ENCODE measurements at regions of chr2 and their contacts with region 1.

Region 1: DNA sequence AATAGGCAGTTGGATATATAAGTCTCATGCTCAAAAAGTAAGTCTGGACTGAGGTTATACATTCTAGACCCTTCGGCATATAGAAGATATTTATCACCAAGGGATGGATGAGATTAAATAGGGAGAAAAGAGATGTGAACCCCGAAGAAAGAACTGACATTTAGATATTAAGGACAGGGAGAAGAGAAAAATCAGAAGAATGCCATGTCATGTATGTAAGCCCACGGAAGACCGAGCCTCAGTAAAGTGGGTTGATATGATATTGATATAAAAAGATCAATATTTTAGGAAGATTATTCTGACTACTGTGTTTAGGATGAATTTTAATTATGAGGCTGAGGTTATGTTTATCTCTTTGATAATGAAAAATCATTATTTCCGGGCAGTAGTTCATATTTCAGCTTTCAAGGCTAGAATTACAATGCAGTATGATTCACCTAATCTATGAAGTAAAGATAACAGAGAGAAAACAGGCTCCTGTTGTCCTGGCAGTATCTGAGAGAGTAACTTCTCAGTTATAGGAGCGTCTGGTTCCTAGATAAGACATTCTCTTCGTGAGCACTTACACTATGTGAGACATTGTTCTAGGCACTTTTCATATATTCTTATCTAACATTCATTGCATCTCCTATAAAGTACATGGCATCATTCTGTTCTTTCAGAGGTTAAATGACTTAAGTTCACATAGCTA is 83.0 kb downstream of the UBR3 start:
- DNase-seq: no peak
- H3K4me3 ChIP-seq: no peak overlapping the region
- H3K27ac ChIP-seq: no peak overlapping the region
- H3K4me1 ChIP-seq: no peaks in the 10 kb centered on the region
- H3K27me3 ChIP-seq: no peaks in the 10 kb centered on the region
- CTCF ChIP-seq: no peak
- POLR2A ChIP-seq: no peak

Region 2: DNA sequence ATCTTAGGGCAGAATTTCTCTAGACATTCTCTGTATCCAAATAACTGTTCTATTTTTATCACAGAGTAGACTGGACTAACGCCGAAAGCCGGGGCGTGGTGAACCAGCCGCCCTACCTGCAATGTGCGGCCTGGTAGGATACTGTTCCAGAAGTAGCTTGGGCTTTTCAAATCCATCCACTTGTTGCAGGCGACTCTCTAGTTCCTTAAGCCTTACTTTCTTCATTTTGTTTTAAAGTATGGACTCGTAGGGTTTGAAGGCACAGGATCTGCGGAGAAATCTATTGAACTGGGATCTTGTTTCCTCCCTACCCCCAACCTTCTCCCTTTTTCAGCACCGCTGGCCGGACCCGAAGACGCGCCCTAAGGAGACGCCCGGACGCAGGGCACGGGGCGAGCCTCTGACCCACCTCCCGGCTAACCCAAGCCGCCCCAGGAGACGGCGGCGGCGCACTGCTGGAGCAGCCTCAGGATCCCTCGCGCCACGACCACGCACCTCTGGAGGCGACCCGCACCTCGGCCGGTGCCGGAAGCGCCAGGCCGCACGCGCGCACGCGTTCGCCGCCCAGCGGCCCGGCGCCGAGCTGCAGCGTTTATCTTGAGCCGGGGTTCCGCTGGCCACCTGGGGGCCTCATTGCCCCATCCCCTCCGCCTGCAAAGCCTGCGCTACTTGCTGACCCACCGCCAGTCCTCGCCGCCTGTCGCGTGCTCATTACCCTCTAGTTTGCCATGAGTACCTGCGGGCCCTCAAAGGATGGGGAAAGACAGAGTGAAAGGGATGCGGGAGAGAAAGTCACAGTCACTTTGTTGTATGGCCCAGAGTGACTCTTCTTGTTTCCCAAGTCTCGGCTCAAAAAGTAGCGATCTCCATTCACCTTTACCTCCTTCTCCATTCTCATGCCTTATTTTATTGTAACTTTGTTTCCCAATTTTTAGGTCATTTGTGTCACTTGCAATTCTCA is 85.6 kb before region 1 on chr2 and contains the start of gene METTL5:
- intact Hi-C with region 1: loop called (anchors 10 kb)
- DNase-seq: peak; percentile 95
- H3K4me3 ChIP-seq: peak within 1 kb of the TSS; percentile 57 to 85 (median 78)
- H3K27ac ChIP-seq: peak within 1 kb of the TSS; percentile 51 to 88 (median 81)
- H3K4me1 ChIP-seq: peaks cover 35 to 75% (median 53%) of the 10 kb centered on the region in 6 donors
- H3K27me3 ChIP-seq: no peaks in the 10 kb centered on the region
- CTCF ChIP-seq: peak; percentile 52 to 95 (median 89)
- POLR2A ChIP-seq: peak in 1 of 3 donors; percentile 26
- total RNA-seq, gene METTL5: 24.4 to 38.5 (median 31.9) TPM

Region 3: GRCh38 chr2:169983506-169983905 is 73.3 kb after region 1 on chr2:
- intact Hi-C with region 1: no loop called
- DNase-seq: no peak
- H3K4me3 ChIP-seq: no peak overlapping the region
- H3K27ac ChIP-seq: no peak overlapping the region
- H3K4me1 ChIP-seq: peaks cover 0 to 4% (median 0%) of the 10 kb centered on the region in 6 donors
- H3K27me3 ChIP-seq: no peaks in the 10 kb centered on the region
- CTCF ChIP-seq: no peak
- POLR2A ChIP-seq: no peak

Region 4: DNA sequence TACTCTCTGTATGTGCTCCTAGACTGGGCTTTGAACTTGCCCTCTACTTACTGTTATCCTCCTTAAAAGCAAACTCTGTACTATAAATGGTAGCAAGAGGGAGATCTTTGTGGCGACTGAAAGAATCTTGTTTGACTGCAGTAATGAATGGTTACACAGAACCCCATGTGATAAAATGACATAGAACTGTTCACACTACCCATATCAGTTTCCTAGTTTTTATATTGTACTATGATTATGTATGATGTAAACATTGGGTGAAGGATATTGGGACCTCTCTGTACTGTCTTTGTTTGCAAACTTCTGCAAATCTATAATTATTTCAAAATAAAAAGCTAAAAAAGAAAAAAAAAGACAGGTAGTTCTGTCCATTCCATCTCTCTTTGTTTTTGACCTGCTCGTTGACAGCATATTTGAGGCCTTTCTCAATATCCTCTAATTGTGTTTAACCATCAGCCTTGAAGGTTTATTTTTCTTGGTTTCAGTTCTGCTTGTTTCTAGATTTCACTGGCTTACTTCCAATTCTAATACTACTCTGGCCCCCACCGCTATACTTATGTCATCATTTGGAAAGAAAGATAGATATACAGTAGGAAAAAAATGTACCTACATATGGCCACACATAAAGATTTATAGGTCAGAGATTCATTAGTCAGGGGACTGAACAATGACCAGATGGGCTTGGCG is 188.5 kb after region 1 on chr2:
- intact Hi-C with region 1: no loop called
- DNase-seq: no peak
- H3K4me3 ChIP-seq: no peak overlapping the region
- H3K27ac ChIP-seq: no peak overlapping the region
- H3K4me1 ChIP-seq: no peaks in the 10 kb centered on the region
- H3K27me3 ChIP-seq: no peaks in the 10 kb centered on the region
- CTCF ChIP-seq: no peak
- POLR2A ChIP-seq: no peak